ENCODE measurements at regions of chr19 and their contacts with region 1.

Region 1: DNA sequence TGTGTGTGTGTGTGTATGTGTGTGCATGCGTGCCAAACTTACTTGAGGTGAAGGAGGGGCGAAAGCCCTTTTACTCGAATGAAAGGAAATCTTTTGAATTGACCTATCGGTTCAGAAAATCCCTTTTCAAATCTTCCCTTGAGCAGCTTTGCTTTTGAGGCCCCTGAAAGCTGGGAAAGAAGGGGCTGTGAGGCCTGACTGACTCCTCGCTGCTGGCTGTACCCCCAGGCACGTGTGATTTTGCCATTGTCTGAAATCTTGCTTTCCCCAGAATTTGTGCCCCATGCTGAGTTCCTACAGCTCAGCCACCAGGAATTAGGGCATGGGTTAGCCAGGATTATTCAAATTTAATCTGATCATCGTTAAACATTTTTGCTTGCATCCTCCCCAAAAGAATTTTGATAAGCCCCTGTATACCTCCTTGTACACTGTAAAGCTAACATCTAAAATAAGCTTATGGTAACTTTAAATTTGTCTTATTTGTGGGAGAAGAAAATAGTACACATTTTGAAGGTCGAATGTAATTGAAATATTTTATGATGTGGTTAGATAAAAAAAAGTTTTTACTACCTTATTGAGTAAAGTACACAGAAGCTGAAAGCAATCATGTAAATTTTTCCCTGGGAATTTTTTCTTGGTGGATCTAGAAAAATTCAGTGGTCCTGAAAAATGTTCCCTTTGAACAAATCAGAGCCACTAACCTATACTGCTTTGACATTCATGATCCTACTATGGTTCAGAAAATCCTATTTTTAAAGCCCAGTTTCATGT is 46.7 kb downstream of the SIPA1L3 start:
- H3K4me3 Mint-ChIP-seq: no peak overlapping the region
- H3K27ac Mint-ChIP-seq: peak overlapping the region; percentile 68
- H3K4me1 Mint-ChIP-seq: peaks cover 53% of the 10 kb centered on the region
- H3K27me3 Mint-ChIP-seq: no peaks in the 10 kb centered on the region

Region 2: GRCh38 chr19:37931881-37932655 is 21.6 kb before region 1 on chr19:
- intact Hi-C with region 1: loop called (anchors 1 kb)
- H3K4me3 Mint-ChIP-seq: peak overlapping the region; percentile 75
- H3K27ac Mint-ChIP-seq: peak overlapping the region; percentile 93
- H3K4me1 Mint-ChIP-seq: peaks cover 67% of the 10 kb centered on the region
- H3K27me3 Mint-ChIP-seq: no peaks in the 10 kb centered on the region

Region 3: DNA sequence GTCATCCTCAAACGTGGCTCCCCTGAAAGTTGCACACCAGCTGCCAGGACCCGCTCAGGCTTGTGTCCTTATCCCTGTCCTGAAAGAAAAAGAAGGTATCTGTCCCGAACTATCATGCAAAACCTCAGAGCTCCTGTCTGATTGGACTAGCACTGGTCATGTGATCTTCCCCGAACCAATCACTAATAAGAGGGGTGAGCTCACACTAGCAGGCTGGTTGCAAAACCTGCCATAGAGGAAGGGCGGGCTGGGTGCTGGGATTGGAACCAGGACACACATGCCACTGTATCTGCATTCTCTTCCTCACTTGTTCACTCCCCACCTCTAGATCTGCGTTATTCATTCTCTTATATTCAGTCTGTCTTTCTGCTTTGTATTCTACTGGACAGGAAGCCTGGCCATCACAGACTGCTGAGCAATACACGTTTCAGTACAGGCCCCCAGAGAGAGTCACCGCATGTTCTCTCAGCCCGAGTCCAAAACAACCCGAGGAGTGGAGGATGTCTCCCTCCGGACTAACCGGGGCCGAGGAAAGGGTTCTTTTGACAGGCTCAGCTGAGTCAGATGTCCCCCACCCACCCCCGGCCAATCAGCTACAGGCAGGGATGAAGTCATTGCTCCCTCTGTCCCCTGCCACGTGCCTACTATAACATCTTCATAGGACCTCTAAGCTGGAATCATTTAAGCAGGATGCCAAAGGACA is 51.0 kb after region 1 on chr19:
- intact Hi-C with region 1: loop called (anchors 10 kb)
- H3K4me3 Mint-ChIP-seq: no peak overlapping the region
- H3K27ac Mint-ChIP-seq: no peak overlapping the region
- H3K4me1 Mint-ChIP-seq: peaks cover 14% of the 10 kb centered on the region
- H3K27me3 Mint-ChIP-seq: no peaks in the 10 kb centered on the region

Measured in dendritic cell treated with granulocyte-macrophage colony-stimulating factor and Interleukin-4, amounts not matched to agents 40 ng/mL and 50 ng/mL, for 4 days (primary cell).